Common myeloid progenitor, CD34-positive (primary cell): ENCODE measurements at regions of chr6 and their contacts with region 1.

Region 1: GRCh38 chr6:2818593-2818992 is 23.1 kb downstream of the SERPINB1 start:
- DNase-seq: peak; percentile 45 to 81 (median 74)
- H3K4me3 ChIP-seq: peak overlapping the region in 3 of 7 experiments; percentile 1 to 38 (median 21)
- H3K27ac ChIP-seq: peak overlapping the region; percentile 92 to 96
- H3K4me1 ChIP-seq: peaks cover 41 to 68% (median 50%) of the 10 kb centered on the region in 4 experiments
- H3K27me3 ChIP-seq: no peaks in the 10 kb centered on the region

Region 2: GRCh38 chr6:2831392-2831791 is 12.8 kb after region 1 on chr6:
- CTCF ChIA-PET with region 1: interaction called, 17 read pairs
- POLR2A ChIA-PET with region 1: interaction called, 4 read pairs
- DNase-seq: no peak
- H3K4me3 ChIP-seq: no peak overlapping the region
- H3K27ac ChIP-seq: peak overlapping the region in 1 of 2 experiments; percentile 15
- H3K4me1 ChIP-seq: peaks cover 5 to 34% (median 11%) of the 10 kb centered on the region in 4 experiments
- H3K27me3 ChIP-seq: no peaks in the 10 kb centered on the region